Mammary epithelial cell (primary cell): ENCODE measurements at regions of chr5 and their contacts with region 1.

Region 1: DNA sequence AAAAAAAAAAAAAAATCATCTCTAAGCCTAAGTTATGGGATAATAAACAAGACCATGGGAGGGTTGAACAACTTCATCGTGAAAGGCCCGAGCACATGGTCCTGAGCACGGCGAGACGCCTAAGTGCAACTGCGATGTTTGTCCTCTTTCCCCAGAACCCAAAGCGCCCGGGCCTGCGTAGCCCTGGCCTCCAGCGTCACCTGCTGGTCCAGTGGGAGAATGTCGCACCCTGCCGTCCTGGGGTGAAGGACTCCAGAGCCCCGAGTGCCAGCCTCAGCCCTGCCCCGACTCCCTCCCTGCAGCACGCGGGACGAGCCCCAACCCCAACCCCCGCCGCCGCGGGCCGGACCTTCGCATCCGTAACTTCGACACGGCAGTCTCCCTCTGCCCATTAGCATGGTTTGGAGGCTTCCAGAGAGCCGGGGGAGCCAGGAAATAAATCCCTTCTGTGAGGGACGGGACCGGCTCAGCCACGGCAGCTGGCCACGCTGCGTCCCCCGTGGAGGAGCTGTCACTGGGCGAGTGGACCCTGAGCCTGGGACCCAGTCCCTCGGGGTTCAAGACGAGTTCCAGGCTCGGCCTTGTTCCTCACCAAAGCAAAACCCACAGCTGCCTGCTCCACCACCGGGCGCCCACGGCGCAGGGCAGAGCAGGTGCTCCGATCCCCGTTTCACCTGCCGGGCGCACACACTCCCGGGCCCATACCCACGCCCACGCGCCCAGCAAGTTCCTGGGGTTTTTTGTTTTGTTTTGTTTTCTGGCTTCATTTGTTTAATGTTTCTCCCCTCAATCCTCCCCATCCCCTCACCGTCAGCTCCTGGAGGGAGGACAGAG is 132.5 kb upstream of the HAND1 start:
- DNase-seq: peak; percentile 56
- H3K4me3 ChIP-seq: peak overlapping the region in 2 of 3 experiments; percentile 43 to 46
- H3K27ac ChIP-seq: no peak overlapping the region
- H3K4me1 ChIP-seq: peaks cover 11% of the 10 kb centered on the region
- H3K27me3 ChIP-seq: no peaks in the 10 kb centered on the region
- CTCF ChIP-seq: peak; percentile 79 to 98

Region 2: DNA sequence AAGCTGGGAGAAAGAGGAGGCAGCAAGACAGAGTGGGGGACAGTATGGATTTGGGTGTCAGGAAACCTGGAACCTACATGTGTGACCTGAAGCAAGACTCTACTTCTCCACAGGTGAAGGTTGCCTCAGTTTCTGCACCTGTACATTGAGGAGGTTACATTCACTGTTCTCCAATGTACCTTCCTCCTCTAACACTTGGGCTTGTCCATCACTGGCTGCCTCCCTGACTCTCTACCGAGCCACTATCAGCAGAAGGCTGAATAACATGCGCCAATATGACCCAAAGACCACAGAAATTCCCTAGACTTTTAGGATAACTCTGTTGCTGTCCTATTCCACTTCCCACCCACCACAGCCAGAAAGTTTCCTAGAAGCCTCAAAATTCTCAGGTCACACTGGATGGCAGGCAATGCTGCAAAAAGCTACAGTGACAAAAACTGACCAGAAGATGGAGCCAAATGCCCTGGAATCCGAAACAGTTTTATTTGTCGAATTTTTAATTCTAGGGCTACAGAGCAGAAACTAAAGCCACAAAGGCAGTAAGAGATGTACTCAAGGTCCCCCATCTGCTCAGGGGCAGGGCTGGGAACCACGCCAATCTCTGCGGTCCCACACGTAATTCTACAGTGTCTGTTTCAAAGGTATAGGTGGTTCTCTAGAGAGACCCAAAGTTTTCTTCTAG is 636.3 kb before region 1 on chr5:
- CTCF ChIA-PET with region 1: no interaction called
- dilution Hi-C with region 1: no loop called
- in situ Hi-C with region 1: no loop called
- intact Hi-C with region 1: loop called (anchors 10 kb)
- DNase-seq: peak; percentile 25
- H3K4me3 ChIP-seq: no peak overlapping the region
- H3K27ac ChIP-seq: no peak overlapping the region
- H3K4me1 ChIP-seq: no peaks in the 10 kb centered on the region
- H3K27me3 ChIP-seq: no peaks in the 10 kb centered on the region
- CTCF ChIP-seq: peak; percentile 72 to 75

Region 3: DNA sequence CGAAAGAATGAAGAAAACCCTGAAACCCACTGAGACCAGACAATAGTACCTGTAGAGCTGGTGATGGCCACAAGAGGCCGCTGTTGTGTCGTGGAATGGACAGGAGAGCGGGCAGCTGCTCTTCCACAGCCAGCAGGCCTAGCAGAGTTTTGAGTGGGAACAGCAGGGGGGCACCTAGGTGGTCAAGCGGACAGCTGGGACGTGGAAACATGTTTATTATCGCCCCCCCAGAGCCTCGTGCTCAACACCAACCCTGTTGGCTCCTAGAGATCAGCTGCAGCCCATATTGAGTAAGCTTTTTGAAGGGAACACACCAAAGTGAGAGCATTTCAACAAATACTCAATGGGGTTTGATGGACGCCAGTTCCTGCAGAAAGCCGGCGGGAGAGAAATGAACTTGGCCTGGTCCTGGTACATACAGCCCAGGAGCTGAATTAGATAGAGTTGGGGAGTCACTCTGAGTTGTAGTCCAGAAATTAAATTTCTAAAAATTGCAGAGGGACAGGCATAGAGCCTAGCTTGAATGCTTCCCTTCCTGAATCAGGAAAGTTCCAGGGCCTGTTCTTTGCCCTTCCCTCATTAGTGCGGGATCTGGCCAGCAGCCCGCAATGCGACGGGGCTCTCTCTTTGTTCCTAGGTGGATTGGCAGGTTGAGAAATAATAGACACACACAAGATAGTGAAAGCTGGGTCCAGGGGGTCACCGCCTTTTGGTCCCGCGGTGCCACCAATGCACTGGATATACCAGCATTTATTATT is 537.9 kb before region 1 on chr5:
- CTCF ChIA-PET with region 1: no interaction called
- dilution Hi-C with region 1: no loop called
- in situ Hi-C with region 1: loop called (anchors 10 to 25 kb)
- intact Hi-C with region 1: loop called (anchors 1 kb)
- DNase-seq: peak; percentile 56
- H3K4me3 ChIP-seq: no peak overlapping the region
- H3K27ac ChIP-seq: no peak overlapping the region
- H3K4me1 ChIP-seq: peaks cover 3% of the 10 kb centered on the region
- H3K27me3 ChIP-seq: no peaks in the 10 kb centered on the region
- CTCF ChIP-seq: peak; percentile 82 to 90

Region 4: GRCh38 chr5:154189819-154190594 is 420.5 kb before region 1 on chr5:
- CTCF ChIA-PET with region 1: no interaction called
- dilution Hi-C with region 1: no loop called
- in situ Hi-C with region 1: loop called in 1 of 2 experiments (anchors 10 kb)
- intact Hi-C with region 1: loop called (anchors 10 kb)
- DNase-seq: peak; percentile 78
- H3K4me3 ChIP-seq: peak overlapping the region; percentile 61 to 76 (median 64)
- H3K27ac ChIP-seq: peak overlapping the region; percentile 16
- H3K4me1 ChIP-seq: peaks cover 15% of the 10 kb centered on the region
- H3K27me3 ChIP-seq: peaks cover 6% of the 10 kb centered on the region
- CTCF ChIP-seq: peak; percentile 16 to 56

Region 5: DNA sequence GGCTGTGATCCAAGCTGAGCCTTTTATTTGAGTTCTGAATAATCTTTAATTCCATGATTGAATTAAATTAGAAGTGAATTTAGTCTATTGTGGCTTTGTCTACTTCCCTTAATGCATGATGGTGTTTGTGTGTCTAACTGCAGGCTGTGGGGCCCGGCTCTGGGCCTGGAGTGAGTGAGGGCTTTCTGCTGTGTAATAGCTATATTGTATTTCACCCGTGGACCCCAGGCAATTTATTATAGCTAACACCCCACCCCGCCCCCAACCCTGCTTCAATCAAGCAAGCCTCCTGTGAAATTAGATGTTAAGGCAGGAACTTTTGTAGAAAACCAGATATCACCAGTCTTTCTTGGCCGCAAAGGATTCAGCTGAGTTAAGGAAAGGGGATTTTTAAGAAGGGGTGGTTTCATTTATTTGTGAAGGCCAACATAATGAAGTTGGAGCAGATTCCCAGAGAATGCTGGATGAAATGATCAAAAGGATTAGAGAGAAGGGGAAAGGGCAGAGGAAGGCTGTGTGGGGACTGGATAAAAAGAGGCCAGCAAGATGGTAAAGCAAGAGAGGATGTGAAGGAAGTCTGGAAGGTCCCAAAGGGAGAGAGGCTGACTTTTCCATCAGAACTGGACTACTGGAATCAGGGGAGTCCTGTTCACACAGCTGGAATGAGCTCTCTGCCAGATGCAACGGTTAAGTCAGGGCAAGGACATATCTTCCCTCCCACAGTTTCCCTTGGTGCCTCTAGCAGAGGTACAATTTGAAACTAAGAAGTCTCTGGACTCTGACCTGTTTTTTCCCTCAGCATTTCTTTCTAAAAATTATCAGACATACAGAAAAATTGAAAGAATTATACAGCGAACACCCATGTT is 290.1 kb before region 1 on chr5:
- CTCF ChIA-PET with region 1: no interaction called
- dilution Hi-C with region 1: no loop called
- in situ Hi-C with region 1: no loop called
- intact Hi-C with region 1: no loop called
- DNase-seq: no peak
- H3K4me3 ChIP-seq: no peak overlapping the region
- H3K27ac ChIP-seq: no peak overlapping the region
- H3K4me1 ChIP-seq: no peaks in the 10 kb centered on the region
- H3K27me3 ChIP-seq: no peaks in the 10 kb centered on the region
- CTCF ChIP-seq: no peak

Region 6: DNA sequence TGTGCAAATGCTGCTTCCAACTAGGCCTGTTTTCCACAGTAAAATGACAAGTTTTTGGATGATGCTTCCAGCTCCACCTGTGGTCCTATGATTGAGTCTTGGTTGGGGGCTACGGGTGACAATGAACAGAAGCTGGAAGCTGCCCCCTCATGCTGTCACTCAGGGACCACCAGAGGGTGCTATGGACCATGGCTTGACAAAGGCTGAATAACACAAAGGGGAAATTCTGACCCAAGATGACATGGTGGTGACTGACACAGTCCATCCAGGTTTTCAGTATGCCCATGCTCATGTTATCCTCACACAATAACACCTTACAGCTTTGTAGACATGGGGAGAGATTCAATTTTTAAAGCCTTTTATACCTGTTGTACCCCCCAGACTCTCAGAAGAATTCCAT is 188.7 kb before region 1 on chr5:
- CTCF ChIA-PET with region 1: no interaction called
- dilution Hi-C with region 1: no loop called
- in situ Hi-C with region 1: no loop called
- intact Hi-C with region 1: loop called (anchors 5 kb)
- DNase-seq: no peak
- H3K4me3 ChIP-seq: no peak overlapping the region
- H3K27ac ChIP-seq: no peak overlapping the region
- H3K4me1 ChIP-seq: no peaks in the 10 kb centered on the region
- H3K27me3 ChIP-seq: no peaks in the 10 kb centered on the region
- CTCF ChIP-seq: peak; percentile 28 to 42

Region 7: DNA sequence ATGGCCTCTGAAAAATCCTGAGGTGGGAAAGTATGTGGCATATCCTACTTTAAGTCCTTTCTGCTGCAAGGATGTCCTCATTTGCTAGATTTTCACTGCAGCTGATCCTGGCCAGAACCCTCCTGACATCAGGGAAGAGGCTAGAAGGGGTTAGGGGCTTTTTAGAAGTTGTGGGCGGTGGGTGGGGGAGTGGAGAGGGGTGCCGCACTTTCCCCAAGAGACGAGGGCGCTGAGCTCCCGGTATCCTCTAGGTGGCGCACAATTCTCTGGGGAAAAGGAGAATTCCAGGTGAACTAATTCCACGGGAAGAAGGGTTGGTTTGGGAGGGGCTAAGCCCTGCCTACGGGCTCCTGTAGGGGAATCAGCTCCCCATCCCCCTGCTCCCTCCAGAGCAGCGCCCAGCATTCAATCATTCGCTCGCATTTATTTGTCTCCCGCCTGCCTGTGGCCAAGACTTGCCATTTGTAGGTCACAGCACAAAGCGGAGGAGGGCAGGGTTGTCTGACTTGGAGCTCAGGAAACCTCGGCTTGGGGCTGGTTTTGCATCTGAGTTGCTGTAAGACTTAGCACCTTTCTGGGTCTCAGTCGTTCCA is 89.6 kb before region 1 on chr5:
- CTCF ChIA-PET with region 1: interaction called, 3 read pairs
- dilution Hi-C with region 1: no loop called
- in situ Hi-C with region 1: loop called in 1 of 2 experiments (anchors 10 kb)
- intact Hi-C with region 1: loop called (anchors 1 kb)
- DNase-seq: no peak
- H3K4me3 ChIP-seq: peak overlapping the region in 1 of 3 experiments; percentile 23
- H3K27ac ChIP-seq: no peak overlapping the region
- H3K4me1 ChIP-seq: peaks cover 15% of the 10 kb centered on the region
- H3K27me3 ChIP-seq: no peaks in the 10 kb centered on the region
- CTCF ChIP-seq: peak; percentile 67 to 87

Region 8: DNA sequence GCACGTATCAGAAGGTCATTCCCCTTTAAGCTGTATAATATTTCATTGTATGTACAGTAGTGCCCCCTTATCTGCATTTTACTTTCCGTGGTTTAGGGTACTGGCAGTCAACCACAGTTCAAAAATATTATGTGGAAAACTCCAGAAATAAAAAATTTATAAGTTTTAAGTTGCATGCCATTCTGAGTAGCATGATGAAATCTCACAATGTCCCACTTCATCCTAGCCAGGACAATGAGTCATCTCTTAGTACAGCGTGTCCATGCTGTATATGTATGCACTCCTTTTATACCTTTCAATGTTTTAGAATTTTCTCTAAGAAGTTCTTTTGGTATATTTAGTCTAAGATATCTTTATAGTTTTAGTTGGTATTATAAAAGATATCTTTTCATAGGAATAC is 17.5 kb before region 1 on chr5:
- CTCF ChIA-PET with region 1: no interaction called
- dilution Hi-C with region 1: no loop called
- in situ Hi-C with region 1: no loop called
- intact Hi-C with region 1: no loop called
- DNase-seq: peak; percentile 38
- H3K4me3 ChIP-seq: no peak overlapping the region
- H3K27ac ChIP-seq: no peak overlapping the region
- H3K4me1 ChIP-seq: no peaks in the 10 kb centered on the region
- H3K27me3 ChIP-seq: no peaks in the 10 kb centered on the region
- CTCF ChIP-seq: no peak